Gastrocnemius medialis (tissue), 4 donors: ENCODE measurements at regions of chr11 and their contacts with region 1.

Region 1: GRCh38 chr11:16572945-16573344 is 165.5 kb upstream of the C11orf58 start:
- DNase-seq: peak; percentile 58 to 71
- ATAC-seq: peak; percentile 100
- H3K4me3 ChIP-seq: no peak overlapping the region
- H3K27ac ChIP-seq: peak overlapping the region; percentile 60 to 83 (median 74)
- H3K4me1 ChIP-seq: peaks cover 37 to 40% of the 10 kb centered on the region in 2 donors
- H3K27me3 ChIP-seq: no peaks in the 10 kb centered on the region
- CTCF ChIP-seq: no peak
- POLR2A ChIP-seq: no peak

Region 2: GRCh38 chr11:16468735-16469453 is 104.1 kb before region 1 on chr11:
- in situ Hi-C with region 1: no loop called
- intact Hi-C with region 1: loop called (anchors 10 kb)
- DNase-seq: no peak
- ATAC-seq: peak; percentile 67 to 73
- H3K4me3 ChIP-seq: no peak overlapping the region
- H3K27ac ChIP-seq: peak overlapping the region; percentile 6 to 73 (median 56)
- H3K4me1 ChIP-seq: peaks cover 35 to 42% of the 10 kb centered on the region in 2 donors
- H3K27me3 ChIP-seq: no peaks in the 10 kb centered on the region
- CTCF ChIP-seq: no peak
- POLR2A ChIP-seq: no peak

Region 3: DNA sequence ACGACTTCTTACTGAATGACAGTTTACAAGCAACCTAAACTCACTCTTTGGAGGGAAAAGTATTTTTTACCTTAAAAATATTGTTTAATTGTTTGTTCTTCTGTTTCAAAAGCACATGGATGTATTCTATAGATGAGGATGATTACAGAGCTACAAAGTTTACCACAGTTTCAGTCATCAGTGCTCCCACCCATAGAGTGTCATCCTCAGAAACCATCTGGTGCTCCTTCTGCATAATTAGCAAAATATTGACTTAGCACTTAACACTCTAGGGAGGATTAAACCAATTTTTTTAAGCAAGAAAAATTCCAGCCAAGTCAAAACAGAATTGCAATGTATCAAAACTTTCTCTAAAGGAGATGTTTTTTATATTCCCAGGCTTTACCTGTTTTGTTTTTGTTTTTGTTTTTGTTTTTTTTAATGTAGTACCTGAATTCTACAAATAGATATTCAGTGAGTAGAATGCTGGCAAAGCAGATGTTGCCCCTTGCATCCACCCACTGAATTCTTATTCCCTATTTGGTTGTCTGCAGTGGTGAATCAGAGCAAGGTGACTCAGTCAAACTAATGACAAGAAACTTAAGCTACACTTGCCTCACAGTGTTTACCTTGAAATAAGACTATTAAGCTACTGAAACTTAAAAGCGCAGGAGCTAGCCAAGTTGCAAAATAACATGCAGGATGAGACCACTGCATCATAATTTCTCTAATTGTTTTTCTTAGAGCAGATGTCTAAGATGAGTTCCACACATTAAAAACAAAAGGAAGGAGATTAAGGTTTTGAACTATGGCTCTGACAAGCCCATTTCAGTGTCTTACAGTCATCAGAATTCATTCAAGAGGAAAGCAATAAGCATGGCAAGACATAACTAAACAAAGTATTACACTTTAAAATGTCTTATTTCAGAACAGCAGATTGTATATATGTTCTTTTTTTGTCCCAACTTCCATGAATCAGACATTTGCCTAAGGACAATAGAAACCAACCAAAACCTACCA is 61.5 kb before region 1 on chr11:
- in situ Hi-C with region 1: no loop called
- intact Hi-C with region 1: loop called (anchors 2 kb)
- DNase-seq: no peak
- ATAC-seq: peak; percentile 94 to 97
- H3K4me3 ChIP-seq: no peak overlapping the region
- H3K27ac ChIP-seq: peak overlapping the region; percentile 57 to 86 (median 76)
- H3K4me1 ChIP-seq: peaks cover 30 to 34% of the 10 kb centered on the region in 2 donors
- H3K27me3 ChIP-seq: no peaks in the 10 kb centered on the region
- CTCF ChIP-seq: no peak
- POLR2A ChIP-seq: no peak

Region 4: GRCh38 chr11:16554361-16554760 is 18.6 kb before region 1 on chr11:
- in situ Hi-C with region 1: no loop called
- intact Hi-C with region 1: no loop called
- DNase-seq: no peak
- ATAC-seq: no peak
- H3K4me3 ChIP-seq: no peak overlapping the region
- H3K27ac ChIP-seq: peak overlapping the region in 1 of 4 donors; percentile 39
- H3K4me1 ChIP-seq: peaks cover 50 to 52% of the 10 kb centered on the region in 2 donors
- H3K27me3 ChIP-seq: no peaks in the 10 kb centered on the region
- CTCF ChIP-seq: no peak
- POLR2A ChIP-seq: no peak

Region 5: DNA sequence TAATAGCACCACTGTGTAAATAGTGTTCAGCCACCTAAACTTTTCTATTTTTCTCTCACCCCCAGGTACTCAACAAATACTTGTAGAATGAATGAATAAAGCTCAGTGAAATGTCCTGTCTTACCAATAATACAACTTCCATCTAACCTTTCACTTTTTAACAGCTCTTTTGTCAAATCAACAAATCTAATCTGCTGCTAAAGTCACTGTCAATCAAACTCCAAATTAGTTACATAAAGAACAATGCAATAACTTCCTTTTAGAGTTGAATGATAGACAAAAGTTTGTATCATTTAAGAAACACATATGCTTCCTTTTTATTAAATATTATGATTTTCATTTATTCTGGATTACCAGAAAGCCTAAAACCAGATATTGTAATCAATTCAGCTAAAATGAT is 130.8 kb after region 1 on chr11:
- in situ Hi-C with region 1: no loop called
- intact Hi-C with region 1: no loop called
- DNase-seq: no peak
- ATAC-seq: no peak
- H3K4me3 ChIP-seq: no peak overlapping the region
- H3K27ac ChIP-seq: no peak overlapping the region
- H3K4me1 ChIP-seq: no peaks in the 10 kb centered on the region
- H3K27me3 ChIP-seq: no peaks in the 10 kb centered on the region
- CTCF ChIP-seq: no peak
- POLR2A ChIP-seq: no peak